Heart right ventricle (tissue), 16 donors: ENCODE measurements at regions of chr15 and their contacts with region 1.

Region 1: DNA sequence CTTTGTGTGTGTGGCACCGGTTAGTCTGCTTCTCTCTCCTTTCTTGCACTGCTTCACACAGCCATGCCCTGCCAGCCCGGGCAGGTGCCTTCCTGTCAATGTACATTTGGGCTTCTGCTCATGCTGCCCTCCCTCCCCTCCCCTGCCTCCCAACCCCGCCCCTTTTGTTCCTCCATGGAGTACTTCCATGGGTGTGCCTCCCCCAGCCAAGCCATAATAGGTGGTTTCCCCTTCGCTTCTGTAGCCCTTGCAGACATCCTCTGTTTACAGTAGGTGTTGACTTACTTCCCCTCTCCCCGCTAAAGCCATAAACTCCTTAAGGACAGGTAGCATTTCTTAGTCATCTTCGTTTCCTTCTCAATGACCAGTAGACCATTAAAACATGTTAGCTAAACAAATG is 31.8 kb upstream of the CRTC3 start:
- DNase-seq: no peak
- ATAC-seq: peak in 4 of 8 donors; percentile 26 to 40 (median 38)
- H3K4me3 ChIP-seq: no peak overlapping the region
- H3K27ac ChIP-seq: no peak overlapping the region
- H3K4me1 ChIP-seq: peaks cover 0 to 18% (median 12%) of the 10 kb centered on the region in 9 donors
- H3K27me3 ChIP-seq: no peaks in the 10 kb centered on the region
- CTCF ChIP-seq: no peak

Region 2: DNA sequence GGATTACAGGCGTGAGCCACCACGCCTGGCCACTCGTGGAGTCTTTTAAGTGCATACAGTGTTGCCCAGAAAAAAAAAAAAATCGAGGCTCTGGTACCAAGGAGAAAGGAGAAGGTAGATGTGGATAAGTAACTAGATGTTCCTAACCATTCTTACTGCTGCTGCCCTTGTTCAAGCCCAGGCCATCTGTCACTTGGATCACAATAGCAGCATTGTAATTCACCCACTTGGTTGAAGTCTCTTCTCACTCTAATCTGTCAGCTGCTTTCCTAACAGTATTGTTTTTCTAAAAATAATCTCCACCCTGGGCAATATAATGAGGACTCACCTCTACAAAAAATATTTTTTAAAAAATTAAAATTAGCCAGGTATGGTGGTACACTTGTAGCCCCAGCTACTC is 26.1 kb before region 1 on chr15:
- intact Hi-C with region 1: loop called in 1 of 10 experiments (anchors 2 kb)
- DNase-seq: no peak
- ATAC-seq: no peak
- H3K4me3 ChIP-seq: no peak overlapping the region
- H3K27ac ChIP-seq: peak overlapping the region in 1 of 10 donors; percentile 15
- H3K4me1 ChIP-seq: peaks cover 0 to 25% (median 5%) of the 10 kb centered on the region in 9 donors
- H3K27me3 ChIP-seq: no peaks in the 10 kb centered on the region
- CTCF ChIP-seq: no peak

Region 3: GRCh38 chr15:90603893-90604292 is 106.0 kb after region 1 on chr15:
- intact Hi-C with region 1: loop called in 1 of 10 experiments (anchors 10 kb)
- DNase-seq: peak in 1 of 2 donors; percentile 49
- ATAC-seq: peak in 1 of 8 donors; percentile 42
- H3K4me3 ChIP-seq: no peak overlapping the region
- H3K27ac ChIP-seq: no peak overlapping the region
- H3K4me1 ChIP-seq: peaks cover 0 to 12% (median 2%) of the 10 kb centered on the region in 9 donors
- H3K27me3 ChIP-seq: no peaks in the 10 kb centered on the region
- CTCF ChIP-seq: peak in 8 of 9 donors; percentile 11 to 62 (median 51)